ENCODE measurements at regions of chr5 and their contacts with region 1.

Region 1: GRCh38 chr5:51131266-51131665 is 252.0 kb upstream of the ISL1 start:
- DNase-seq: no peak
- H3K4me3 Mint-ChIP-seq: no peak overlapping the region
- H3K27ac Mint-ChIP-seq: no peak overlapping the region
- H3K4me1 Mint-ChIP-seq: no peaks in the 10 kb centered on the region
- H3K27me3 Mint-ChIP-seq: peaks cover 19% of the 10 kb centered on the region
- CTCF ChIP-seq: no peak

Region 2: GRCh38 chr5:51162245-51162644 is 31.0 kb after region 1 on chr5:
- CTCF ChIA-PET with region 1: no interaction called
- POLR2A ChIA-PET with region 1: no interaction called
- intact Hi-C with region 1: loop called (anchors 1 kb)
- DNase-seq: no peak
- H3K4me3 Mint-ChIP-seq: no peak overlapping the region
- H3K27ac Mint-ChIP-seq: no peak overlapping the region
- H3K4me1 Mint-ChIP-seq: no peaks in the 10 kb centered on the region
- H3K27me3 Mint-ChIP-seq: no peaks in the 10 kb centered on the region
- CTCF ChIP-seq: no peak

Measured in MCF 10A (cell line).